GM23248 (cell line): ENCODE measurements at regions of chr12 and their contacts with region 1.

Region 1: DNA sequence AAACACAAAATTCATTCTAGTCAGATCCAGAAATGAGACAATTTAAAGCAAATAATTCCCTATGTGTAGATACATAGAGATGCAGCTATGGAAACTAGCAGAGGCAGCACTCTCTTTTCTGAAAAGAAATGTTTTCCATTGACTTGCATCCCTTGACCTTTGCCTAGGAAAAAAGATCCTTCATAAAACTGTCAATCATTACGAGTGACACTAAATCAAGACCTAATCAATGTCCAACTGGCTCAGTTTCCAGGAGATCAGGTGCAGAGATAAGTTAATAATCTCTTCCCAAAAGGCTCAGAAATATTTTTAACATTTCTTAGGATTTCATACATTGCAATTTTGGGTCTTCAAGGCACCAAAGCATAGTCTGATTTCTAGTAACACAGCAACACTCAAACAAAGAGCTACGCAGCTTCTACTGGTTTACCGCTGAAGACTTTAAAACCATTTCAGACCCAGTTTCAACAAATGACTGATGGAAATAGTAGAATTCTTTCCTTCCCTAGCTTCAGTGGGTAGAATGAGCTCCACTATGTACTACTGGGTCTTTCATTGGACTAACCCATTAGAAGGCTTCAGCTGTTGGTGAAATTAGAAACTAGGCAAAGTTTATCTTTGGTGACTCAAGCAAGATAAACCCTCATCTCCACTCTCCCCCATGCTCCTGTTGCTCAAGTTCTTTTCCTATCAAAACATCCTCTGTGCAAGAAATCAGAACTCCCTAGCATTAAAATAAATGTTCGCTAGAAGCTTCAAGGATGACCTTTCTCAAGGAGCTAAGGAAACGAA is 159.4 kb downstream of the PAWR start:
- DNase-seq: no peak
- H3K4me3 ChIP-seq: no peak overlapping the region
- H3K27ac ChIP-seq: no peak overlapping the region
- H3K4me1 ChIP-seq: peaks cover 21% of the 10 kb centered on the region
- H3K27me3 ChIP-seq: no peaks in the 10 kb centered on the region

Region 2: GRCh38 chr12:79366378-79366777 is 164.9 kb before region 1 on chr12:
- in situ Hi-C with region 1: no loop called
- DNase-seq: no peak
- H3K4me3 ChIP-seq: no peak overlapping the region
- H3K27ac ChIP-seq: no peak overlapping the region
- H3K4me1 ChIP-seq: no peaks in the 10 kb centered on the region
- H3K27me3 ChIP-seq: no peaks in the 10 kb centered on the region

Region 3: GRCh38 chr12:79420146-79420618 is 111.1 kb before region 1 on chr12:
- in situ Hi-C with region 1: loop called (anchors 10 kb)
- DNase-seq: peak; percentile 94
- H3K4me3 ChIP-seq: no peak overlapping the region
- H3K27ac ChIP-seq: peak overlapping the region; percentile 92
- H3K4me1 ChIP-seq: peaks cover 67% of the 10 kb centered on the region
- H3K27me3 ChIP-seq: no peaks in the 10 kb centered on the region

Region 4: DNA sequence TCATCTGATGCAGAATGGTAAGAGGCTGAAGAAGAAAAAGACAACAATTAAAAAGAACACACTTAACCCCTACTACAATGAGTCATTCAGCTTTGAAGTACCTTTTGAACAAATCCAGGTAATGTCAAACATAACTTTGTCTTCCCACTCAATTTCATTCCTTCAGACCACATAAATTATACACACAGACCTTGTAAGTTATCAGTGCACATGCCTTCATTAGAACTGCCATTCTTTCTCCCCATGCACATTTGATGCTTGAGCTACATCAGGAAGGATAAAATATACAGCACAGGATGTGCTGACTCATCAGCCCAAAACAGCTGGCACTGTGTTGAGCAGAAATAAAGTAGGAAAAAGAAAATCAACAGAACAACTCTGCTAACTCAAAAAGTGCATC is 87.2 kb before region 1 on chr12:
- in situ Hi-C with region 1: no loop called
- DNase-seq: peak; percentile 53
- H3K4me3 ChIP-seq: no peak overlapping the region
- H3K27ac ChIP-seq: no peak overlapping the region
- H3K4me1 ChIP-seq: peaks cover 12% of the 10 kb centered on the region
- H3K27me3 ChIP-seq: no peaks in the 10 kb centered on the region

Region 5: DNA sequence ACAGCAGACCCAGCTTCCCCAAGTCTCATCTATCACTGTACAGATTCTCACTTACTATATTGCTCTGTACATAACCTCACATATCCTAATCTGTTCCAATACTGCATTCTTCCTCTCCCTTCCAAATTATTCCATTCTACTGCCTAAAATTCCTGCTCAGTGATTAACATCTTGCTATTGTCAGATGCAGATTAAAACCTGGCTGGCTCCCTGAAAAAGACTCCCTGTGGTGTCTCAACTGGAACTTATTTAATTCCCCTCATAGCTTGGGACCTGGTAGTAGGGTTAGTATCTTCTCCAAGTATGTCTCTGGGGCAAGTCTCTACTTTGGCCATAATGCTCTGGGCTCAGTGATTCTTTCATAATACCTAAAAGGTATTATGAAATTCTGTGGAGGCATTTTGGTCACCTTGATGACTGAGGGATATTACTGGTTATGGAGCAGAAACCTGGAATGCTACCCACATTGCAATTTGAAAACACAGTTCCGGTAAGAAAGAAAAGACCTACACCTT is 103.7 kb after region 1 on chr12:
- in situ Hi-C with region 1: no loop called
- DNase-seq: peak; percentile 78
- H3K4me3 ChIP-seq: peak overlapping the region; percentile 18
- H3K27ac ChIP-seq: peak overlapping the region; percentile 59
- H3K4me1 ChIP-seq: peaks cover 40% of the 10 kb centered on the region
- H3K27me3 ChIP-seq: no peaks in the 10 kb centered on the region